T-cell (primary cell): ENCODE measurements at regions of chr10 and their contacts with region 1.

Region 1: DNA sequence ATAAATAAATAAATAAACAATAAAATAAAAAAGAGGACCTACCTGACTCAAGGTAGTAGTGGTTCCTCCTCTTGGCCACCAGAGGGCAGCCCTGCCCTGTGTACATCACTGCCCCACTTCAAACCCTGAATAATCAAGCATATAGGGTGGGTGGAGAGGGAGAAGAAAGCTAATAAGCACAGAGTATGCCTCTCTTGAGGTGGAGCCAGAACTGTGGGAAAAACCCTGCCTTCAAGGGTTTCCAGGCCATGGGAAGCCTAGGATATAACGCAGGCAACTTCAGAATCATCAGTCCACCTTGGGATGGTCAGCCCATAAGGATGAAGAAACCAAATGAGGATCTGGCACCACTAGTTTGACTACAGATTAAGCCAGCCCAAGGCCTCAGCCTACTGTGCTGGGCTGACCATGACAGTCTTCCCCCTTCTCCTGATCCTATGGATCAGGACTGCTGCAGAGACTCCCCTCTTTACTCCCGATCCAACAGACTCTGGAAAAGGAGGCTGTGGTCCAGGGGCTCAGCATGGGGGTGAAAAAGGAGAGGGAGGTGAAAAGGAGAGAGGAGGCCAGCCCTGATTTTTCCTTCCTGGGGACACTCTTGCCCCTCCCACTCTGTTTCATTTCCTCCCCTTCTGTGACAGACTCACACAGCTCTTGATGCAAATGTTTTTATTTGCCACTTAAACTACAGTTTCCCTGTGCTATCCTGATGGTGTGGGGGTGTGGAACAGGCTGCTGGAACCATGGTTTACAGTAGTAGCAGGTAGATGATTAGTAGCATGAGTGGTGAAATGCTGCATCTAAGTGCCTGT is 10.1 kb downstream of the AVPI1 start:
- DNase-seq: peak in 34 of 35 experiments; percentile 4 to 79 (median 41)
- ATAC-seq: peak; percentile 83 to 87 (median 86)
- H3K4me3 ChIP-seq: no peak overlapping the region
- H3K4me3 Mint-ChIP-seq: no peak overlapping the region
- H3K27ac ChIP-seq: no peak overlapping the region
- H3K27ac Mint-ChIP-seq: peak overlapping the region in 1 of 2 donors; percentile 71
- H3K4me1 ChIP-seq: peaks cover 0 to 4% of the 10 kb centered on the region in 2 experiments
- H3K4me1 Mint-ChIP-seq: peaks cover 0 to 2% (median 2%) of the 10 kb centered on the region in 3 donors
- H3K27me3 ChIP-seq: no peaks in the 10 kb centered on the region
- H3K27me3 Mint-ChIP-seq: no peaks in the 10 kb centered on the region

Region 2: DNA sequence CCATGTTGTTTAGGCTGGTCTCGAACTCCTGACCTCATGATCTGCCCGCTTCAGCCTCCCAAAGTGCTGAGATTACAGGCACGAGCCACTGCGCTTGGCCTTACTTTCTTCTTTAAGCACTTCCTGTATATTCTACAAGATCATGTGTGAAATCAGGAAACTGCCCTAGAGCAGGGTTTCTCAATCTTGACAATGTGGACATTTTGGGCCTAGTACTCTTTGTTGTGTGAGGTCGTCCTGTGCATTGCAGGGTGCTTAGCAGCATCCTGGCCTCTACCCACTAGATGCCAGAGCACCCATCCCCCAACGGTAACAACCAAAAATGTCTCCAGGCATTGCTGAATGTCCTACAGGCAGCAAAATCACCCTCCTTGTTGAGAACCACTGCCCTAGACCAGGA is 300.6 kb before region 1 on chr10:
- CTCF ChIA-PET with region 1: no interaction called
- POLR2A ChIA-PET with region 1: no interaction called
- DNase-seq: no peak
- ATAC-seq: no peak
- H3K4me3 ChIP-seq: no peak overlapping the region
- H3K4me3 Mint-ChIP-seq: no peak overlapping the region
- H3K27ac ChIP-seq: no peak overlapping the region
- H3K27ac Mint-ChIP-seq: no peak overlapping the region
- H3K4me1 ChIP-seq: no peaks in the 10 kb centered on the region
- H3K4me1 Mint-ChIP-seq: no peaks in the 10 kb centered on the region
- H3K27me3 ChIP-seq: no peaks in the 10 kb centered on the region
- H3K27me3 Mint-ChIP-seq: no peaks in the 10 kb centered on the region

Region 3: DNA sequence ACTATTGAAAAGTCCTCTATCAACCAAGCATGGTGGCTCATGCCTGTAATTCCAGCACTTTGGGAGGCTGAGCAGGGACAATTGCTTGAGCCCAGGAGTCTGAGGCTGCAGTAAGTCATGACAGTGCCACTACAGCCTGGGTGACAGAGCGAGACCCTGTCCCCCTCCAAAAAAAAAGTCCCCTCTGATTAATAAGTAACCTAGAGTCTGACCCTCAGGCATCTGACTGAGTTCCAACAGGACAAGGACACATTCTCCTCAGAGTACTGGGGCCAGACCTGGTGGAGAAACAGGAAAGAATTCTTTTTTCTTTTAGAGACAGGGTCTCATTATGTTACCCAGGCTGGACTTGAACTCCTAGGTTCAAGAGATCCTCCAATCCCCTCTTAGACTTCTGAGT is 53.7 kb before region 1 on chr10:
- CTCF ChIA-PET with region 1: no interaction called
- POLR2A ChIA-PET with region 1: no interaction called
- DNase-seq: no peak
- ATAC-seq: no peak
- H3K4me3 ChIP-seq: no peak overlapping the region
- H3K4me3 Mint-ChIP-seq: no peak overlapping the region
- H3K27ac ChIP-seq: no peak overlapping the region
- H3K27ac Mint-ChIP-seq: no peak overlapping the region
- H3K4me1 ChIP-seq: no peaks in the 10 kb centered on the region
- H3K4me1 Mint-ChIP-seq: no peaks in the 10 kb centered on the region
- H3K27me3 ChIP-seq: no peaks in the 10 kb centered on the region
- H3K27me3 Mint-ChIP-seq: no peaks in the 10 kb centered on the region

Region 4: DNA sequence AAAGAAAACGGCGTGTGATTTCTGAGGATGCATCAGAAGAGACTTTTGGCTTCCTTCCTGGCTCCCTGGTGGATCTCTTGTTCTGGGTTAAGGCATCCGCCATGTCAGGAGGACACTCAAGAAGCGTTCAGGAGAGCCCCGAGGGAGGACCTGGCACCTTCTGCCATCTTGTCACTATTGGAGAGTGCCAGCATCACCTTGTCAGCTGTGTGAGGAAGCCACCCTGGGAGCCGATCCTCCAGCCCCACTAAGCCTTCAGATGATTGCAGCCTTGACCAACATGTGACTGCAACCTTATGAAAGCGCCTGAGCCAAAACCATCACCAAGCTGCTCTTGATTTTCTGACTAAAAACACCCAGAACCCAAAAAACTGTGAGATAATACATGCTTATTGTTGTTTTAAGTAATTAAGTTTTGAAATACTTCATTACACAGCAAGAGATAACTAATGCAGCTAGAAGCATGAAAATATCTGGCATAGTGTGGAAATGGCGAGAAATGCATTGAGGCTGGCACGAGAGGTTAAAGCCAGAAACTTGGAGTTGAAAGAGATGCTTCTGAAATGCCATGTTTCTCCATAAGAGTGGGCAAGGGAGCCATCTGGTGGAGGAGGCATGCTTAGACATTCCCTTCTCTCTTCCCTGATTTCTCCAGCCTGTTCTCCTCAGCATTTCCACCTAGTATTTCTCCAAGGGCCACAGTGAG is 54.5 kb after region 1 on chr10:
- CTCF ChIA-PET with region 1: interaction called, 9 to 12 read pairs
- POLR2A ChIA-PET with region 1: interaction called in 1 of 2 experiments, 3 read pairs
- DNase-seq: peak in 27 of 35 experiments; percentile 13 to 81 (median 44)
- ATAC-seq: peak; percentile 53 to 69 (median 60)
- H3K4me3 ChIP-seq: no peak overlapping the region
- H3K4me3 Mint-ChIP-seq: no peak overlapping the region
- H3K27ac ChIP-seq: no peak overlapping the region
- H3K27ac Mint-ChIP-seq: no peak overlapping the region
- H3K4me1 ChIP-seq: peaks cover 0 to 5% of the 10 kb centered on the region in 2 experiments
- H3K4me1 Mint-ChIP-seq: peaks cover 6 to 11% (median 11%) of the 10 kb centered on the region in 3 donors
- H3K27me3 ChIP-seq: peaks cover 0 to 15% of the 10 kb centered on the region in 2 experiments
- H3K27me3 Mint-ChIP-seq: peaks cover 0 to 13% of the 10 kb centered on the region in 2 donors

Region 5: GRCh38 chr10:97868134-97868685 is 191.2 kb after region 1 on chr10:
- CTCF ChIA-PET with region 1: no interaction called
- POLR2A ChIA-PET with region 1: no interaction called
- DNase-seq: no peak
- ATAC-seq: no peak
- H3K4me3 ChIP-seq: no peak overlapping the region
- H3K4me3 Mint-ChIP-seq: no peak overlapping the region
- H3K27ac ChIP-seq: no peak overlapping the region
- H3K27ac Mint-ChIP-seq: peak overlapping the region; percentile 1 to 86
- H3K4me1 ChIP-seq: peaks cover 10 to 20% of the 10 kb centered on the region in 2 experiments
- H3K4me1 Mint-ChIP-seq: peaks cover 8 to 16% (median 13%) of the 10 kb centered on the region in 3 donors
- H3K27me3 ChIP-seq: peaks cover 0 to under 1% of the 10 kb centered on the region in 2 experiments
- H3K27me3 Mint-ChIP-seq: no peaks in the 10 kb centered on the region